Endothelial cell of umbilical vein (primary cell): ENCODE measurements at regions of chr17 and their contacts with region 1.

Region 1: GRCh38 chr17:80454557-80455335 is 21.7 kb downstream of the NPTX1 start:
- DNase-seq: peak; percentile 94
- H3K4me3 ChIP-seq: peak overlapping the region; percentile 40 to 69 (median 56)
- H3K27ac ChIP-seq: peak overlapping the region; percentile 72
- H3K4me1 ChIP-seq: peaks cover 9% of the 10 kb centered on the region
- H3K27me3 ChIP-seq: peaks cover 0 to 6% of the 10 kb centered on the region in 2 experiments
- CTCF ChIP-seq: no peak
- POLR2A ChIP-seq: peak; percentile 97

Region 2: GRCh38 chr17:80414803-80415625 is 39.7 kb before region 1 on chr17 and contains the start of gene ENDOV:
- CTCF ChIA-PET with region 1: no interaction called
- POLR2A ChIA-PET with region 1: no interaction called
- dilution Hi-C with region 1: no loop called
- intact Hi-C with region 1: loop called (anchors 1 kb)
- DNase-seq: peak; percentile 91
- H3K4me3 ChIP-seq: peak within 1 kb of the TSS; percentile 53 to 64 (median 55)
- H3K27ac ChIP-seq: peak within 1 kb of the TSS; percentile 91
- H3K4me1 ChIP-seq: peaks cover 11% of the 10 kb centered on the region
- H3K27me3 ChIP-seq: peaks cover 6 to 8% of the 10 kb centered on the region in 2 experiments
- CTCF ChIP-seq: no peak
- POLR2A ChIP-seq: peak; percentile 85
- total RNA-seq, gene ENDOV: 17.6 and 25.9 TPM in 2 replicates

Region 3: DNA sequence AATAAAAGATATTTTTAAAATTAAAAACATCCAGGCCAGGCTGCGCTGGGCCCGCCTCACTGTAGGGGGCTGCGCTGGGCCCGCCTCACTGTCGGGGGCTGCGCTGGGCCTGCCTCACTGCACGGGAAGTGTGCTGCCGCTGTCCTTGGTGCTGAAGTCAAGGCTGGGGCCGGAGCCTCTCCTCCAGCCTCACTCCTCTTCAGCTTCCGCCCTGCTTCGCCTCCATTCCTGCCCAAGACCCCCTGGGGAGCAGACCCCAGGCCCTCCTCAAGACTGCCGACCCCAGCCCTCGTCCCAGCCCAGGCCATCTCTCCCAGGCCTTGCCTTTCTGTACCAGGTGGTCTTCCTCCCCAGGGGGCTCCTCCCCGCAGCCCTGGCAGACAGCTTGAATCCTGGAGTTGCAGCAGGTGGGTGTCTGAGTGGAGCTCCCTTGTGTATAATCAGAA is 13.6 kb before region 1 on chr17:
- CTCF ChIA-PET with region 1: interaction called, 10 read pairs
- POLR2A ChIA-PET with region 1: no interaction called
- dilution Hi-C with region 1: no loop called
- intact Hi-C with region 1: loop called (anchors 1 kb)
- DNase-seq: peak; percentile 11
- H3K4me3 ChIP-seq: no peak overlapping the region
- H3K27ac ChIP-seq: no peak overlapping the region
- H3K4me1 ChIP-seq: no peaks in the 10 kb centered on the region
- H3K27me3 ChIP-seq: no peaks in the 10 kb centered on the region
- CTCF ChIP-seq: no peak
- POLR2A ChIP-seq: no peak

Region 4: GRCh38 chr17:80477647-80478478 is 23.1 kb after region 1 on chr17:
- CTCF ChIA-PET with region 1: interaction called, 4 read pairs
- POLR2A ChIA-PET with region 1: interaction called, 4 read pairs
- dilution Hi-C with region 1: no loop called
- intact Hi-C with region 1: loop called (anchors 2 kb)
- DNase-seq: peak; percentile 21
- H3K4me3 ChIP-seq: no peak overlapping the region
- H3K27ac ChIP-seq: no peak overlapping the region
- H3K4me1 ChIP-seq: no peaks in the 10 kb centered on the region
- H3K27me3 ChIP-seq: peaks cover 69 to 74% of the 10 kb centered on the region in 2 experiments
- CTCF ChIP-seq: peak; percentile 8 to 67
- POLR2A ChIP-seq: no peak

Region 5: GRCh38 chr17:80892019-80892855 is 437.5 kb after region 1 on chr17:
- CTCF ChIA-PET with region 1: no interaction called
- POLR2A ChIA-PET with region 1: no interaction called
- dilution Hi-C with region 1: no loop called
- intact Hi-C with region 1: loop called (anchors 1 kb)
- DNase-seq: peak; percentile 91
- H3K4me3 ChIP-seq: no peak overlapping the region
- H3K27ac ChIP-seq: peak overlapping the region; percentile 79
- H3K4me1 ChIP-seq: peaks cover 28% of the 10 kb centered on the region
- H3K27me3 ChIP-seq: no peaks in the 10 kb centered on the region
- CTCF ChIP-seq: no peak
- POLR2A ChIP-seq: no peak